Transverse colon (tissue), 4 donors: ENCODE measurements at regions of chr15 and their contacts with region 1.

Region 1: DNA sequence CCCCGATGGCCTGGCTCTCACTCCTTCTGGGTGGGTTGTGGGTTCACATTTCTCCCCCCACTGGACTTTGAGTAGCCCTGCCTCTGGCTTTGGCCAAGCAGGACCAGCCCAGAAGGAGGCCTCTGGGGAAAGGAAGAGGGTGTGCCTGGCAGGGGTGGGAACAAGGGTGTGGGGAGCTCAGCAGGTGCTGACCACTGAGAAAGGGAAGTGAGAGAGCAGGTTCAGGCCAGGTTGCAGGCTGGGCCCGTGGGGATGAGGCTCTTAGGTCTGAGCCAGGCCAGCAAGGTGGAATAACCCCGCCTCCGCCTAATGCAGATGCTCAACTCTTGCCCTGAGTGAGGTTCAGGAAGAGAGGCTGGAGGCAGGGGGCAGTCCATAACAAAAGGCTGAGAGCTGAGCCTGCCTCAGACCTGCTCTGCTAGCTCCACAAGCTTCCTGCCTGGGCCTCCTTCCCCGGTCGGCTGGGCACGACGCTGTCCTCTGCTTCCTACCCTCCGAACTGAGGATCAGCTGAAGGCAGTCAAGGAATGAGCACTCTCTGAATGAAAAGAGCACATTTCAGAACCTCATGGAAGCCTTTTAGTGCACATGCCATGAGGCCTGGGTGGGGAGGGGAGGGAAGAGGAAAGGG is 82.7 kb downstream of the TLE3 start:
- DNase-seq: peak; percentile 78
- H3K4me3 ChIP-seq: no peak overlapping the region
- H3K27ac ChIP-seq: peak overlapping the region in 2 of 4 donors; percentile 16 to 67
- H3K4me1 ChIP-seq: no peaks in the 10 kb centered on the region
- H3K27me3 ChIP-seq: no peaks in the 10 kb centered on the region
- CTCF ChIP-seq: no peak
- EP300 ChIP-seq: no peak
- POLR2A ChIP-seq: no peak

Region 2: DNA sequence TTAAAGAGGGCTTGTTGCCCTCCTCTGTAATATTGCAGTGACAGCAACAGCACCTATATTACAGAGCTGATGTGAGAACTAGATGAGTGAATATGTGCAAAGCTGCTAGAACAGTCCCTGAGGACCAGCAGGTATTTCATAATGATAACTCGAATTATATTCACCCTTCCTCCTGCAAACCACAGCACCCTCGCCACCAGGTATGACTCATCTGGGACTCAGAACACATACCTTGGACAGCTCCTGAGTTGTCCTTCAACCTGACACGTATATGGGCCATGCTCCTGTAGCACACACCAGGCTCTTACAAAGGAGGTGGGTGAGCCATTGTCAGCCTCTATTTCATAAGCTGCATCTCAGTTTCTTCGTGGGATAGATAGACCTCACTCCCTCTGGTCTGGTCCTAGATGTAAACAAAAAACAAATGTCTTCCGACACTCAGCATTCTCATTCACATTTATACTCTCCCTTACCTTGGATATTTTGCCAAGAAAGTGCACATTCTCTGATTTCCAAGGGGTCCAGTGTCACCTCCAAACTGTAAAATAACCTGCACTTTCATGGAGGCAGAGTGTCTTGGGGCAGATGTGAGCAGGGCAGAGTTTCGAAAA is 41.8 kb before region 1 on chr15:
- in situ Hi-C with region 1: no loop called
- intact Hi-C with region 1: loop called (anchors 5 kb)
- DNase-seq: no peak
- H3K4me3 ChIP-seq: no peak overlapping the region
- H3K27ac ChIP-seq: no peak overlapping the region
- H3K4me1 ChIP-seq: no peaks in the 10 kb centered on the region
- H3K27me3 ChIP-seq: peaks cover 18% of the 10 kb centered on the region
- CTCF ChIP-seq: no peak
- EP300 ChIP-seq: no peak
- POLR2A ChIP-seq: no peak

Region 3: DNA sequence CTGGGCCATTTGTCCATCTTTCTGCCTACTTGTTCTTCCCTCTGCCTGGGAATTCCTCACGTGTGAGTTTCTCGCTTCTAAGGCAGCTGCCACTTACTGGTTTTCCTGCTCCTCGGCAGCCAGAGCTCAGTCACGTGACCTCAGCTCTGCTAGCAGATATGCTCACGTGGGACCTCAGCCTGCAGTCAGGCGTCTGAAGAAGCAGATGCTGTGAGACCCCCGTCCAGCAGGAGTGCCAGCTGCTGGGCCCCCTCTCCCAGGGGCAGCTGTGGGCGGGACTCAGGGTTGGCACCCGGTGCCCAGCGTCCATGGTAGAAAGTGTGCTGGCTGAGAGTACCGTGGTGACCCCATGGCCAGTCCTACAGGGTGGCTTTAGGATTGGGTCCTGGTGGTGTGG is 244.1 kb after region 1 on chr15:
- in situ Hi-C with region 1: no loop called
- intact Hi-C with region 1: no loop called
- DNase-seq: peak; percentile 65
- H3K4me3 ChIP-seq: no peak overlapping the region
- H3K27ac ChIP-seq: peak overlapping the region in 2 of 4 donors; percentile 2 to 26
- H3K4me1 ChIP-seq: peaks cover 8 to 31% (median 12%) of the 10 kb centered on the region in 4 donors
- H3K27me3 ChIP-seq: no peaks in the 10 kb centered on the region
- CTCF ChIP-seq: no peak
- EP300 ChIP-seq: no peak
- POLR2A ChIP-seq: no peak